ENCODE measurements at regions of chr1 and their contacts with region 1.

Region 1: GRCh38 chr1:22861764-22862440 is 110.8 kb downstream of the LACTBL1 start:
- DNase-seq: peak; percentile 58
- ATAC-seq: peak; percentile 81
- H3K4me3 Mint-ChIP-seq: no peak overlapping the region
- H3K27ac Mint-ChIP-seq: no peak overlapping the region
- H3K4me1 Mint-ChIP-seq: no peaks in the 10 kb centered on the region
- H3K27me3 Mint-ChIP-seq: no peaks in the 10 kb centered on the region
- CTCF ChIP-seq: peak; percentile 87

Region 2: DNA sequence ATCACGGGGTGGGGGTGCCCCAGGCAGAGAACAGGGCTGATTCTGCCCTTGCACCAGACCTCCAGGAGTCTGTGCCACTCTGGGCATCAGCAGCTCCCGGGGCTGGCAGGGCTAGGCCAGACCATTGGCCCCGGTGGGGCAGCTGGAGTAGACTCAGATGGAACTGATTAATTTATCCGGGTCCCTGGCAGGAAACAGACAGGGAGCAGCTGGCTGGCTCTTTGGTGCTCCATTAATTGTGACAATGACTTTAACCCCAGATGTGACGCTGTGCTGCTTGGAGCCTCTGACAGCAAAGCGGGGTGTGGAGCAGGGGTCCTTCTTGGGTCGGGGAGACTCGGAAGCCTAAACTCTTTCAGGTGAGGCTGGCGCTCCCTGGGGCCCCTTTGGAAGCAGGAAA is 289.1 kb before region 1 on chr1:
- CTCF ChIA-PET with region 1: no interaction called
- POLR2A ChIA-PET with region 1: no interaction called
- DNase-seq: no peak
- ATAC-seq: no peak
- H3K4me3 Mint-ChIP-seq: no peak overlapping the region
- H3K27ac Mint-ChIP-seq: no peak overlapping the region
- H3K4me1 Mint-ChIP-seq: peaks cover 7% of the 10 kb centered on the region
- H3K27me3 Mint-ChIP-seq: no peaks in the 10 kb centered on the region
- CTCF ChIP-seq: no peak

Region 3: GRCh38 chr1:22673486-22674409 is 188.2 kb before region 1 on chr1:
- CTCF ChIA-PET with region 1: interaction called, 14 read pairs
- POLR2A ChIA-PET with region 1: no interaction called
- DNase-seq: peak; percentile 67
- ATAC-seq: peak; percentile 49
- H3K4me3 Mint-ChIP-seq: no peak overlapping the region
- H3K27ac Mint-ChIP-seq: no peak overlapping the region
- H3K4me1 Mint-ChIP-seq: peaks cover 7% of the 10 kb centered on the region; the same call in 1 of the 2 replicates
- H3K27me3 Mint-ChIP-seq: no peaks in the 10 kb centered on the region
- CTCF ChIP-seq: peak; percentile 46

Region 4: DNA sequence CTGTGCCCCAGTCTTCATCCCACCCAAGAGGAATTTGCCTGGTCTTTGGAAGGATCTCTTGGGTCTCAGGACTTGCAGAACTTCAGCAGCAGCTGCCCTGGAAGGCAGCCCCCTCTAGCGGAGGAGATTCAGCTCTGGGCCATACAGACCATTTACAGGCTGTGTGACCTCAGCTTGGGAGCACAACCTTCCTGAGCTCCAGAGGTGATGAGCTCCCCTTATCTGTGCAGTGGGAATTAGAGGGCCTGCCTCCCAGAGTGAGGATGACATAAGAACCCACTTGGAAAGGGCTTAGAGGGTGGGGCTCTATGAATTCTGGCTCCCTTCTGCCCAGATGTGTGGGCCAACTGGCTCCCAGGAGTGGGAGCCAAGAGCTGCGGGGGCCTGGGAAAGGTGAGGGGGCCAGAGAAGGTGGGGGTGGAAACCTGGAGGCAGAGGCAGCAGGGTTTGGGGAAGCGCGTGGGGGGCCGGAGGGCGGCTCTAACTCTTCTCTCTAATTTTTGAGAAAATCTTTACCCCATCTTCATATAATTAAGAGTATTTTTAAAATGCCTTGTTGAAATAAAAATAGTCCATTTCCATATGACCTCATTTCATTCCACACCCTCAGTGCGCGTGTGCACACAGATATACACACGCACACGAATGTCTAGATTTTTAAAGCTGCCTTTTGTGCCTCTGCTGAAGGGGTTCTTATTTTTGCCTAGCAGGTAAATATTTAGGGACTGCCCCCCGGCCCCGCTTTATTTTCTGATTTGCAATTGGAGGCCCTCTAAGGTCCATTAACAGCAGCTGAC is 129.8 kb before region 1 on chr1:
- CTCF ChIA-PET with region 1: interaction called, 11 read pairs
- POLR2A ChIA-PET with region 1: no interaction called
- DNase-seq: peak; percentile 54
- ATAC-seq: peak; percentile 59
- H3K4me3 Mint-ChIP-seq: no peak overlapping the region
- H3K27ac Mint-ChIP-seq: no peak overlapping the region
- H3K4me1 Mint-ChIP-seq: peaks cover 12% of the 10 kb centered on the region
- H3K27me3 Mint-ChIP-seq: no peaks in the 10 kb centered on the region
- CTCF ChIP-seq: no peak

Region 5: GRCh38 chr1:22773981-22774832 is 87.7 kb before region 1 on chr1:
- CTCF ChIA-PET with region 1: no interaction called
- POLR2A ChIA-PET with region 1: no interaction called
- DNase-seq: no peak
- ATAC-seq: no peak
- H3K4me3 Mint-ChIP-seq: no peak overlapping the region
- H3K27ac Mint-ChIP-seq: no peak overlapping the region; the same call in 1 of the 2 replicates
- H3K4me1 Mint-ChIP-seq: peaks cover 12% of the 10 kb centered on the region
- H3K27me3 Mint-ChIP-seq: no peaks in the 10 kb centered on the region
- CTCF ChIP-seq: no peak

Region 6: GRCh38 chr1:22794647-22795365 is 67.1 kb before region 1 on chr1:
- CTCF ChIA-PET with region 1: interaction called, 12 read pairs
- POLR2A ChIA-PET with region 1: no interaction called
- DNase-seq: no peak
- ATAC-seq: no peak; the same call in 1 of the 2 replicates
- H3K4me3 Mint-ChIP-seq: no peak overlapping the region
- H3K27ac Mint-ChIP-seq: no peak overlapping the region
- H3K4me1 Mint-ChIP-seq: peaks cover 33% of the 10 kb centered on the region
- H3K27me3 Mint-ChIP-seq: no peaks in the 10 kb centered on the region; the same call in 1 of the 2 replicates
- CTCF ChIP-seq: no peak

Region 7: DNA sequence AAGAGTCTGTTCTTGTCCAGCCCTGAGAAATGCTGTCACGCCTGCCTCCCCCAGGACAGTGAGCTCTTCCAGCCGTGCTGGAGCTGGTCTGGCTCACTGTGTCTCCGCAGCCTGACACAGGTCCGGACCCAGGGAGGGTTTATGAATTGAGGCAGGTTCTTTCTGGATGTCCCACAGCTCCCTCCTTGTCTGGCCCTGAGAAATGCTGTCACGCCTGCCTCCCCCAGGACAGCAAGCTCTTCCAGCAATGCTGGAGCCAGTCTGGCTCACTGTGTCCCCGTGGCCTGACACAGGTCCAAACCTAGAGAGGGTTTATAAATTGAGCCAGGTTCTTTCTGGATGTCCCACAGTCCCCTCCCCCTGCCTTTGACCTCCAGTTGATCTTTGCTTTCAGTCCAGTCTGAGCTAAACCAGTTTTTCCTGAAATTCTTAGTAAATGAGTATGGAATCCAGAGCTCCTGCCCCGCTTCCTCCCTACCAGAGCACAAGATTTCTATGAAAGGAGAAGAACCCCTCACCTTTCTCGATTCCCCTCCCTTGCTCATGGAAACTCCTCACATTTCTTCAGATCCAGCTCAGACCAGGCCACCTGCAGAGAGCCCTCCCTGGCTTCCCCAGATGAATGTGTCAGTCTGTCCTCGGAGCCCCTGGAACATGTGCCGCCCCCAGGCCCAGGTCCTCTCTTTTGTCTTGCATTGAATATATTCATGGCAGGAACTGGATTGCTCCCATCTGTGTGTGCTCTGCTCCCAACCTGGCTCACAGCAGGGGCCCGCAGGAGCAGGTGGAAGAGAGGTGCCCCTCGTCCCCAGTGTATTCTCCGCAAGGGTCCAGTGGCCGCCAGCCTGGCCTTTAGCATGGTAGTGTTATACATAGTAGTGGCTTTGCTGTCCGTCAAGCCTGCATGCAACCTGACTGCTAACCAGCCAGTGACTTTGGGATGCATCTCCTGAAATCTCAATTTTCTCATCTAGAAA is 35.0 kb before region 1 on chr1:
- CTCF ChIA-PET with region 1: interaction called, 16 read pairs
- POLR2A ChIA-PET with region 1: no interaction called
- DNase-seq: peak; percentile 45
- ATAC-seq: peak; percentile 38
- H3K4me3 Mint-ChIP-seq: peak overlapping the region; percentile 32
- H3K27ac Mint-ChIP-seq: peak overlapping the region; percentile 95
- H3K4me1 Mint-ChIP-seq: peaks cover 44% of the 10 kb centered on the region
- H3K27me3 Mint-ChIP-seq: no peaks in the 10 kb centered on the region
- CTCF ChIP-seq: no peak

Region 8: GRCh38 chr1:22850681-22851080 is 11.2 kb before region 1 on chr1:
- CTCF ChIA-PET with region 1: interaction called, 57 read pairs
- POLR2A ChIA-PET with region 1: no interaction called
- DNase-seq: no peak
- ATAC-seq: no peak
- H3K4me3 Mint-ChIP-seq: no peak overlapping the region
- H3K27ac Mint-ChIP-seq: no peak overlapping the region
- H3K4me1 Mint-ChIP-seq: peaks cover 35% of the 10 kb centered on the region
- H3K27me3 Mint-ChIP-seq: peaks cover 10% of the 10 kb centered on the region
- CTCF ChIP-seq: no peak

Measured in WTC11 (cell line).